ENCODE measurements at regions of chr11 and their contacts with region 1.

Region 1: DNA sequence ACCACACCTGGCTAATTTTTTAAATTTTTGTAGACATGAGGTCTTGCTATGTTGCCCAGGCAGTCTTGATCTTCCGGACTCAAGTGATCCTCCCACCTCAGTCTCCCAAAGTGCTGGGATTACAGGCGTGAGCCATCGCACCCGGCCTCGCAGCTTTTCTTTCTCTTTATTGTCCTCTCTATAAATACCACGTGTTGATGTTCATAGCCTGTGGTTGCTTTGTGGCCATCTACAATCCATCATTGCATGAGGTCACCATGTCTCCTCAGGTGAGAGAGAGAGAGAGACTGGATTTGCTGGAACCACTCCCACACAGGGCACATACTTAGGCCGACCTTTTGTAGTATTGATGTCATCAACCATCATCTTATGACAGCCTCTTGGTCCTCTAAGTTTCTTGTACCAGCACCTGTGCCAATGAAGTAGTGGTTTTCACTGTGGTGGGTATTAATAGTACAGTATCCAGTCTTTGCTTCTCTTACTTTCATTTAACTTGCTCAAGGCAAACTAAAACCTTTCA is 22.9 kb upstream of the P2RY6 start:
- DNase-seq: peak; percentile 33
- ATAC-seq: no peak
- H3K4me3 ChIP-seq: no peak overlapping the region
- H3K27ac ChIP-seq: no peak overlapping the region
- H3K4me1 ChIP-seq: no peaks in the 10 kb centered on the region
- H3K27me3 ChIP-seq: no peaks in the 10 kb centered on the region
- CTCF ChIP-seq: no peak

Region 2: GRCh38 chr11:73288873-73289707 is 39.9 kb after region 1 on chr11:
- CTCF ChIA-PET with region 1: no interaction called
- POLR2A ChIA-PET with region 1: no interaction called
- intact Hi-C with region 1: loop called (anchors 5 kb)
- DNase-seq: peak; percentile 82
- ATAC-seq: peak; percentile 79
- H3K4me3 ChIP-seq: peak overlapping the region; percentile 19; the same call in 1 of the 2 replicates
- H3K27ac ChIP-seq: peak overlapping the region; percentile 41
- H3K4me1 ChIP-seq: peaks cover 11% of the 10 kb centered on the region
- H3K27me3 ChIP-seq: no peaks in the 10 kb centered on the region
- CTCF ChIP-seq: peak; percentile 99

Region 3: GRCh38 chr11:73597956-73598718 is 348.9 kb after region 1 on chr11 and contains the start of gene FAM168A:
- CTCF ChIA-PET with region 1: no interaction called
- POLR2A ChIA-PET with region 1: no interaction called
- intact Hi-C with region 1: no loop called
- DNase-seq: peak; percentile 97
- ATAC-seq: peak; percentile 95
- H3K4me3 ChIP-seq: peak within 1 kb of the TSS; percentile 81
- H3K27ac ChIP-seq: peak within 1 kb of the TSS; percentile 23; the same call in 1 of the 2 replicates
- H3K4me1 ChIP-seq: peaks cover 21% of the 10 kb centered on the region
- H3K27me3 ChIP-seq: no peaks in the 10 kb centered on the region
- CTCF ChIP-seq: no peak
- total RNA-seq, gene FAM168A: 24.5 and 27.8 TPM in 2 replicates

Measured in PC-3 (cell line).